Activated CD8-positive, alpha-beta T cell treated with anti-CD3 and anti-CD28 coated beads for 36 hours (primary cell): ENCODE measurements at regions of chr4 and their contacts with region 1.

Region 1: GRCh38 chr4:100014616-100015015 is 64.5 kb upstream of the H2AZ1 start:
- DNase-seq: no peak
- ATAC-seq: no peak
- H3K4me3 Mint-ChIP-seq: no peak overlapping the region
- H3K27ac Mint-ChIP-seq: no peak overlapping the region
- H3K4me1 Mint-ChIP-seq: peaks cover 6% of the 10 kb centered on the region
- H3K27me3 Mint-ChIP-seq: no peaks in the 10 kb centered on the region
- CTCF ChIP-seq: no peak

Region 2: DNA sequence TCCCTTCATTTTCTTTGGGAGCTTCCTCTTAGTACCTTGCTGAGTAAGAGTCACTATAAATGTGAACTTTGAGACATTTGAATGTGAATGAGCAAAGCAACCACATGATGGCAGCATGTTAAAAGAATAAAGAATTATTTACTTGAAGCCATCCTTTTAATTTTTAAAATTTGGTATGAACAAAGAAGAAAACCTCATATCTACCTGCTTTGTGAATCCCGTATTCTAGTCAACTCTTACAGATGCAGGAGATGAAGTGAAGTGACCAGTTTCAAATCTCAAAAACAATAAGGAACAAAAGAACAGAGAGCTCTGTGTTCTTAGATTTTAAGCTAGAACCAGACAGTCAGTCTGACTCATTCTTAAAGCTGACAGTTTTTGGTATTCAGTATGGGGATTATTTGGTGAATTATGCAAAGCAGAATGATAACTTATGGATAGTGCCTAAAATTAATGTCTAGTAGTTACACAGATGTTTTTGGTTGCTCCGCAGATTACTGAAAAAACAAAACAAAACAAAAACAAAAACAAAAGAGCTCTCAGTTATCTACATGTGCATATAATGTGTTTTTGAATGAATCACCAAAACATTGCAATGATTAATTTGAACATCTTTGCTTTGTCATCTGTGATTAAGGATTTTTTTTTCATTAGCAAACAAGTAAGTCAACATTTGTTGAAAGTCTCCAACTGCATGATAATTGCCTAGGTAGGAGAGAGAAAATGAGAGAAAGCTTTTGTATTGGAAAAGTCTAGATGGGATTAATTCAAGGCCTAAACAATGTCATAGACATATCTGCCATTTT is 16.4 kb before region 1 on chr4:
- CTCF ChIA-PET with region 1: interaction called, 11 read pairs
- POLR2A ChIA-PET with region 1: no interaction called
- intact Hi-C with region 1: no loop called
- DNase-seq: peak; percentile 2
- ATAC-seq: no peak
- H3K4me3 Mint-ChIP-seq: no peak overlapping the region
- H3K27ac Mint-ChIP-seq: no peak overlapping the region
- H3K4me1 Mint-ChIP-seq: peaks cover 2% of the 10 kb centered on the region
- H3K27me3 Mint-ChIP-seq: no peaks in the 10 kb centered on the region
- CTCF ChIP-seq: peak; percentile 43

Region 3: DNA sequence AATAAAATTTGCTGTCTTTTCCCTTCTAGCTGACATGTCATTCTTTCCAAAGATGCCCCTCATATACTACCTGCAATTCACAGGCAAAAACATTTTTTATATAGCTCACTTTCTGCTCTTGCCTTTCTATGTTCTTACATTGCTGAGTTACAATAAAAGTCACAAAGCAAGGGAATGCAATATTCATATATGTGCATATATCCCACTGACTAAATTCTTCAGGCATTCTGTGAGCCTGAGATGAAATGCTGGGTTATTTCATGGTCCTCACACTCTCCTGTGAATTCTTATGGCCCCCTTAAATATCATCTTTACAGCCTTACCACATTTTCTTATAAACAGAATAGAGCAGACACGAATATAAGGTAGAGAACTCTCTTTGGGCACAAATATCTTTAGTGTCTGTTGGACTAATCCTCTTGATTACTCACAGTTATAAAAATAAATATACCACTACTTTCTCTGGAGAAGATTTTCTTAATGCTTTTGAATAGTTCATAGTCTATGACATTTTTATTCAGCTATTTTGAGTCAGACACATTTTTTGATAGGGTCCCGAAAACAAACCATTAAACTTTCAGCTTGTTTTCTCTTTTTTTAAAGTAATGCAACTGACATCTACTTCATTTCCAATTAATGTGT is 19.5 kb after region 1 on chr4:
- CTCF ChIA-PET with region 1: no interaction called
- POLR2A ChIA-PET with region 1: no interaction called
- intact Hi-C with region 1: no loop called
- DNase-seq: no peak
- ATAC-seq: no peak
- H3K4me3 Mint-ChIP-seq: no peak overlapping the region
- H3K27ac Mint-ChIP-seq: no peak overlapping the region
- H3K4me1 Mint-ChIP-seq: no peaks in the 10 kb centered on the region
- H3K27me3 Mint-ChIP-seq: peaks cover 5% of the 10 kb centered on the region
- CTCF ChIP-seq: no peak